WTC11 (cell line): ENCODE measurements at regions of chr15 and their contacts with region 1.

Region 1: GRCh38 chr15:61834076-61834697 is 226.1 kb downstream of the VPS13C start:
- DNase-seq: peak; percentile 87
- ATAC-seq: peak; percentile 48
- H3K4me3 Mint-ChIP-seq: no peak overlapping the region
- H3K27ac Mint-ChIP-seq: no peak overlapping the region
- H3K4me1 Mint-ChIP-seq: peaks cover 20% of the 10 kb centered on the region
- H3K27me3 Mint-ChIP-seq: no peaks in the 10 kb centered on the region
- CTCF ChIP-seq: peak; percentile 95

Region 2: DNA sequence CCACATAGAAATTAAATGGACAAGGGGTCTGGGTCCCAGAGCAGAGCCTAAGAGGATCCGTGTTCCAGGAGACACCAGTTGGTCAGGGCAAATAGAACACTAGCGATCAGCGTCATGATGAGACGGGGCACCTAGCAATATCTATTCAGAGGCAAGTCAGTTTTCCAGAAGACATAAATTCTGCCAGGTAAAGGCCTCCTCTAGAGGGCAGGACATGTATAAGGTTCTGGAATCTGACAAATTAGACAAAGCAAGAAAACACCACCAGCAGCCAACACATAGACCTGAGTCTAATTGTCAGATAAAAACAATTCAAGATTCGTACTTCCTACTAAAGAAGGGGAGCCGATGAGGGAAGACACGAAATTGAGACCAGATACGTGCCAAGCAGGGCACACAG is 671.0 kb before region 1 on chr15:
- CTCF ChIA-PET with region 1: interaction called, 67 read pairs
- POLR2A ChIA-PET with region 1: no interaction called
- DNase-seq: no peak
- ATAC-seq: no peak
- H3K4me3 Mint-ChIP-seq: no peak overlapping the region
- H3K27ac Mint-ChIP-seq: no peak overlapping the region
- H3K4me1 Mint-ChIP-seq: peaks cover 13% of the 10 kb centered on the region
- H3K27me3 Mint-ChIP-seq: no peaks in the 10 kb centered on the region
- CTCF ChIP-seq: no peak

Region 3: GRCh38 chr15:61216519-61216918 is 617.7 kb before region 1 on chr15:
- CTCF ChIA-PET with region 1: interaction called, 16 read pairs
- POLR2A ChIA-PET with region 1: no interaction called
- DNase-seq: peak; percentile 53
- ATAC-seq: peak; percentile 99
- H3K4me3 Mint-ChIP-seq: no peak overlapping the region
- H3K27ac Mint-ChIP-seq: peak overlapping the region; percentile 19; the same call in 1 of the 2 replicates
- H3K4me1 Mint-ChIP-seq: peaks cover 30% of the 10 kb centered on the region
- H3K27me3 Mint-ChIP-seq: no peaks in the 10 kb centered on the region
- CTCF ChIP-seq: 0 out of 2 replicates have a peak, but pooled peaks have one; percentile 21

Region 4: GRCh38 chr15:61582092-61582491 is 252.1 kb before region 1 on chr15:
- CTCF ChIA-PET with region 1: interaction called, 10 read pairs
- POLR2A ChIA-PET with region 1: no interaction called
- DNase-seq: no peak
- ATAC-seq: peak; percentile 63
- H3K4me3 Mint-ChIP-seq: no peak overlapping the region
- H3K27ac Mint-ChIP-seq: peak overlapping the region; percentile 6; the same call in 1 of the 2 replicates
- H3K4me1 Mint-ChIP-seq: peaks cover 17% of the 10 kb centered on the region
- H3K27me3 Mint-ChIP-seq: no peaks in the 10 kb centered on the region
- CTCF ChIP-seq: no peak

Region 5: DNA sequence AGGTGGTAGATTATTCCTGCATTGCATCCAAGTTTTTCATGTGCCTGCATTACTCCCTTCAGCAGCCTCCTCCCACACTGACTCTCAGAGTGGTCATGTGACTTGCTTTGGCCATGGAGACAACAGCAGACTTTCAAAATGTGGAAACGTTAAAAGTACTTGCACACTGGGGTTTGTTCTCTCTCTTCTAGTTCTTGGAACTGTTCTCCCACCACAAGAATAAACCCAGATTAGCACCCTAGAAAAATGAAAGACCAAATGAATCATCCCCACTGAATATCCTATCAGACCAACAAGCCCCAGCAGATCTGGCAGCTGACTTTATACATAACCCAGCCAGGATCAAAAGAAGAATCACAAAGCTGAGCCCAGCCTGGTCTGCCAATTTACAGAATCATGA is 172.4 kb before region 1 on chr15:
- CTCF ChIA-PET with region 1: interaction called, 12 read pairs
- POLR2A ChIA-PET with region 1: no interaction called
- DNase-seq: no peak
- ATAC-seq: no peak
- H3K4me3 Mint-ChIP-seq: no peak overlapping the region
- H3K27ac Mint-ChIP-seq: no peak overlapping the region
- H3K4me1 Mint-ChIP-seq: peaks cover 9% of the 10 kb centered on the region
- H3K27me3 Mint-ChIP-seq: no peaks in the 10 kb centered on the region
- CTCF ChIP-seq: no peak

Region 6: DNA sequence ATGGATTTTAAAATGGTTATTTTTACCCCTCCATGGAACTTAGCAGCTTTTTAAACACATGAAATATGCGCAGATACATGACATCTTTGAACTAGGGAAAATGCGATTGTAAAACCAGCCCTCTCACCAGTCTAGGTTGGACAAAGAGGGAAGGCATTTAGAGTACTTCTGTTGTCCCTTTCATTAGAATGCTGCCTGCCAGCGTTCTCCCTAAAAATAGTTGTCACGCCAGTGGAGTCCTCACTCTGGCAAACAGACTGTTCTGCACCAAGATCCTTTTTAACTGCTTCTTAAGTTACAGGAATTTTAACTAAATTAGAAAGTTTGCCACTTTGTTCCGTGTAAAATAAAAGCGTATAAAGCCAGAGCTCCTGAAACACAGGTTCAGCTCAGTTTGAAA is 69.2 kb before region 1 on chr15:
- CTCF ChIA-PET with region 1: interaction called, 11 read pairs
- POLR2A ChIA-PET with region 1: no interaction called
- DNase-seq: no peak
- ATAC-seq: no peak
- H3K4me3 Mint-ChIP-seq: no peak overlapping the region
- H3K27ac Mint-ChIP-seq: no peak overlapping the region
- H3K4me1 Mint-ChIP-seq: peaks cover 14% of the 10 kb centered on the region
- H3K27me3 Mint-ChIP-seq: no peaks in the 10 kb centered on the region
- CTCF ChIP-seq: no peak

Region 7: GRCh38 chr15:61921093-61921492 is 86.9 kb after region 1 on chr15:
- CTCF ChIA-PET with region 1: no interaction called
- POLR2A ChIA-PET with region 1: no interaction called
- DNase-seq: no peak
- ATAC-seq: no peak
- H3K4me3 Mint-ChIP-seq: no peak overlapping the region
- H3K27ac Mint-ChIP-seq: no peak overlapping the region
- H3K4me1 Mint-ChIP-seq: no peaks in the 10 kb centered on the region
- H3K27me3 Mint-ChIP-seq: no peaks in the 10 kb centered on the region
- CTCF ChIP-seq: no peak

Region 8: GRCh38 chr15:62021991-62022600 is 187.9 kb after region 1 on chr15:
- CTCF ChIA-PET with region 1: no interaction called
- POLR2A ChIA-PET with region 1: no interaction called
- DNase-seq: no peak
- ATAC-seq: peak; percentile 60; the same call in 1 of the 2 replicates
- H3K4me3 Mint-ChIP-seq: no peak overlapping the region
- H3K27ac Mint-ChIP-seq: no peak overlapping the region
- H3K4me1 Mint-ChIP-seq: no peaks in the 10 kb centered on the region
- H3K27me3 Mint-ChIP-seq: no peaks in the 10 kb centered on the region
- CTCF ChIP-seq: no peak

Region 9: DNA sequence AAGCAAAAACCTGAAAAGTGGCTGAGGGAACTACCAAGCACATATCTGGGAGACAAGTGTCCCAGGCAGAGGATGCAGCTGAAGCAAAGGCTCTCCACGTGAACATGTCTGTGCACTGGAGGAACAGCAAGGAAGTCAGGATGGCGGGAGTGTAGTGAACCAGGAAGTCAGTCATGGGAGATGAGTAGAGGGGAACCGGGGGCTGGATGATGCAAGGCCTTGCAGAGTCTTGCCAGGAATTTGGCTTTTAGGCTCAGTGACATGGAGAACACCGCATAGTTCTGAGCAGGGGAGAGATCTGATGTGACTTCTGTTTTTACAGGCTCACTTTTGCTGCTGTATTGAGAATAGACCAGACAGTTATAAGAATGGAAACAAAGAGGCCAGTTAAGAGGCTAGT is 251.6 kb after region 1 on chr15:
- CTCF ChIA-PET with region 1: no interaction called
- POLR2A ChIA-PET with region 1: no interaction called
- DNase-seq: no peak
- ATAC-seq: no peak
- H3K4me3 Mint-ChIP-seq: no peak overlapping the region
- H3K27ac Mint-ChIP-seq: no peak overlapping the region
- H3K4me1 Mint-ChIP-seq: no peaks in the 10 kb centered on the region
- H3K27me3 Mint-ChIP-seq: 0 out of 2 replicates have a peak, but pooled peaks cover 5% of the 10 kb centered on the region
- CTCF ChIP-seq: no peak